Left ventricle myocardium superior (tissue), 1 donor: ENCODE measurements at regions of chr6 and their contacts with region 1.

Region 1: GRCh38 chr6:73732845-73733675 is 37.1 kb downstream of the CD109 start:
- DNase-seq: peak; percentile 53
- ATAC-seq: peak; percentile 91

Region 2: GRCh38 chr6:73675466-73676098 is 57.5 kb before region 1 on chr6:
- intact Hi-C with region 1: loop called (anchors 5 kb)
- DNase-seq: peak; percentile 66
- ATAC-seq: peak; percentile 90

Region 3: DNA sequence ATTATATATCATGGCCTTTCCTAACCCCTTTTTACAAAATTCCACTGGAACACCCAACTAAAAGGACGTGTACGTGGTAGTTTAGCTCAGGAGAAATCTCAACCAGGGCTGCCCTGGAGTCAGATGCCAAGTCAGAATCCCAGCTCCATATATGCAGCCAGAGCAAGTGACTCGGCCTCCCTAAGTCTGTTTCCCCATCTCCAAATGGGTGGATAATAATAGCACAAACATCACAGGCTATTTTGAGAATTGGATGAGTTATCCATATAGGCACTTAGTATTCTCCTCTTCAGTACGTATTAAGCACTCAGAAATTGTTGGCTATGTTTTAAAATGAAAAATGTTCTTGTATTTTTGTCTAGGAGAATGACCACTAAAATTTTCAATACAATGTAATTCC is 444.4 kb after region 1 on chr6:
- intact Hi-C with region 1: no loop called
- DNase-seq: no peak
- ATAC-seq: no peak